ENCODE measurements at regions of chr2 and their contacts with region 1.

Region 1: GRCh38 chr2:84495539-84496146 is 20.7 kb upstream of the DNAH6 start:
- DNase-seq: no peak
- ATAC-seq: peak; percentile 83

Region 2: GRCh38 chr2:84539729-84540128 is 44.1 kb after region 1 on chr2:
- intact Hi-C with region 1: no loop called
- DNase-seq: no peak
- ATAC-seq: no peak

Region 3: GRCh38 chr2:84619794-84620371 is 124.2 kb after region 1 on chr2:
- intact Hi-C with region 1: loop called (anchors 10 kb)
- DNase-seq: no peak
- ATAC-seq: no peak

Region 4: GRCh38 chr2:84881581-84882414 is 386.2 kb after region 1 on chr2:
- intact Hi-C with region 1: loop called (anchors 10 kb)
- DNase-seq: peak; percentile 86
- ATAC-seq: peak; percentile 89

Region 5: DNA sequence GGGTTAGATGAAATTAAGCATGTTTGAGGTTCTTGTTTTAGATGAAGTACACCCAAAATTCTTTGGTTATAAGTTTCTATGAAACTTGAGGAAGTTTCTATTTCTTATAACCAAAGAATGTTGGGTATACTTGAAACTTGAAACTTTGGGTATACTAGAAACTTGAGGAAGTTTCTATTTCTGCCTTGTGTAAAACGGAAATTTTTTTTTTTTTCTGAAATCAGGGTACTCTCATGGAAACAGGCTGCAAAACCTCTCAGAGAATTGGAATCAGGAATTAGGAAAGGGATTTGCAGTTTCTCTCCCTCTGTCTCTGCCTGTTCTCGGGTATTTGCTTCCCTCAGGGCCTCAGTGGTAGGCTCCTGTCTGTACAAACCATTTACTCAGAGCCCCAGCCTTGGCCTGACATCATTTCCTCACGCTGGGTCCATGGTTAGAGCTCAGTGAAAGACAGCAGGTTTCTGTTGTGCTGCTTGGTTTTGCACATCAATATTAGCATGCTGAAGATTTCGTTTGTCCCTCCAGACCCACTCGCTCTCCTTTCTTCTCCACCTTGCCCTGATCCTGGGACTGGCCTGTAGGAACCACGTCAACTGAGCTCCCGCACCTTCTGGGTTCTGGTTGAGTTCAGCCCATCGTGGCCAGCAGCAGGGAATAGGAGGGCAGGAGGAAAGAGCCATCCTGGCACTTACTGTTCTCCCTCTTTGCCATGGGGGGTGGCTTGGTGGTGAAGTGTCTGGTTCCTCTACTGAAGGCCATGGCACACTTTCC is 1503.6 kb after region 1 on chr2:
- intact Hi-C with region 1: no loop called
- DNase-seq: peak; percentile 55
- ATAC-seq: peak; percentile 15